ENCODE measurements at regions of chr12 and their contacts with region 1.

Region 1: GRCh38 chr12:69985656-69986055 is 160.6 kb downstream of the MYRFL start:
- DNase-seq: peak; percentile 56
- ATAC-seq: peak; percentile 16; the same call in 1 of the 2 replicates
- H3K4me3 ChIP-seq: no peak overlapping the region
- H3K27ac ChIP-seq: no peak overlapping the region
- H3K4me1 ChIP-seq: peaks cover 27% of the 10 kb centered on the region
- H3K27me3 ChIP-seq: no peaks in the 10 kb centered on the region
- CTCF ChIP-seq: peak; percentile 61

Region 2: GRCh38 chr12:69966409-69967207 is 19.0 kb before region 1 on chr12:
- CTCF ChIA-PET with region 1: no interaction called
- POLR2A ChIA-PET with region 1: no interaction called
- intact Hi-C with region 1: loop called (anchors 2 kb)
- DNase-seq: peak; percentile 95
- ATAC-seq: peak; percentile 99
- H3K4me3 ChIP-seq: peak overlapping the region; percentile 37; the same call in 1 of the 2 replicates
- H3K27ac ChIP-seq: peak overlapping the region; percentile 98
- H3K4me1 ChIP-seq: peaks cover 27% of the 10 kb centered on the region
- H3K27me3 ChIP-seq: no peaks in the 10 kb centered on the region
- CTCF ChIP-seq: no peak

Measured in PC-3 (cell line).